Posterior vena cava (tissue), 2 donors: ENCODE measurements at regions of chr12 and their contacts with region 1.

Region 1: DNA sequence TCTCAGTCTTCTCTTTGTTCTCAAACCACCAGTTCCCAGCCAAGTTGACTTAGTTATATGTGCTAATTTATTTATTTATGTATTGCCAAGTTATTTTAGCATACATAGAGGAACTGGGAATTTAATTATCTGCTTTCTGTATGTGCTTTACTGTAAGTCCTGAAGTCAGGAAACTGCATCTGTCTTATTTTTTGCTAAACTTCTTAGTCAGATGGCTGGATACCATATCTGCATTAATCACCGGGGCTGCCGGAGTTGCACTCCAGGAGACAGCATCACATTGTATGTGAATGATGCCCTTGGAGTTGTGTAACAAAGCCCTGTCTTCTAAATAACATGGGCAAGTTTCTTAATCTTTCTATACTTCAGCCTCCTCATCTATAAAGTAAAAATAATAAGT is 96.2 kb downstream of the MON2 start:
- DNase-seq: no peak

Region 2: DNA sequence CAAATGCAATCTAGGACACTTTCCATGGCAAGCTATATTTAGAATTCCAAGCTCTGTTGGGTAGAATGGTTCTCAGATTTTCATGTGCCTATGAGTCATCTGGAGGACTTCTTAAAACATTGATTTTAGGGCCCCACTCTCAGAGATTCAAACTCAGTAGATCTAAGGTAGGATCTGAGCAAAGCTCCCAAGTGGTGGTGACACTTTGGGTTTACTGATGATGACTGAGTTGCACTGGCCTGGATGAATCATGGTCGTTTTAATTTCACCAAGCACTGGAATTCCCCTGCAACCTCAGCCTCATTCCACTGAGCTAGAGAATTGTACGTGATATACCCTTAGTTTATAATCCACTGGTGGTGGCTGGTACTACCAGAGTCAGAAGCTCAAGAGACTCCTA is 285.6 kb after region 1 on chr12:
- intact Hi-C with region 1: no loop called
- DNase-seq: no peak

Region 3: GRCh38 chr12:64083285-64084210 is 1520.7 kb after region 1 on chr12:
- intact Hi-C with region 1: loop called in 1 of 2 experiments (anchors 5 kb)
- DNase-seq: no peak